ENCODE measurements at regions of chr15 and their contacts with region 1.

Region 1: DNA sequence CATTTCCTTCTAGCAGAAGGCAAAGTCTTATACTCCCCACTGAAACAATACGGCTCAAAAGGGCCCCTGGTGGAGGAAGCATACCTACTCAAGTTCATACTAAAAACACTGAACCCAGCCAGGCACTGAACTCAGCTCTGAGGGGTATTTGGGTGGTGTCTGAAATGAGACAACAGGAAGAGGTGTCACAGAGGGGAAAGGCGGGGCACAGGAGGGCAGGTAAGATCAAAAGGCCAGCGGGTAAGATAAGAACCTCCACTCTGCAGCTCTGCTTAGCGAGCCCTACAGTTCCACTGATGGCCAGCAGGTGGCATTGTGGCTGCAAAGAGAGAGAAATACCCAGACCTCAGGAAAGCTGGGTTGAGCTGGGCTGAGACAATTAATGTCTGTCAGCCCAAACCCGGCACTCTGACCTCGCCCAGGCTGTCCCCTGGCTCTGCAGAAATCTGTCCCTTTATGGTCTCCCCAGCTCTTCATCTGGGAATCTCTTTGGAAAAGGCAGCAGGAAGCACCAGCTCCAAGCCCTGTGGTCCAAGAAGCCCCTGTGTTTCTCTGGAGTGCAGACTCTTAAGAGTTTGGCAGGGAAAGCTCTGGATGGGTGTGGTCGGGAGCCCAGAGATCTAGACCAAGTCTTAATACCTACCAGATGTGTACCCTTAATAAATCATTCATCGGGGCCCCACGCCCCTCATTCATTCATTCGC is 8.4 kb downstream of the MFGE8 start:
- DNase-seq: peak; percentile 86 to 97
- H3K4me3 ChIP-seq: no peak overlapping the region
- CTCF ChIP-seq: peak in 1 of 3 donors; percentile 95
- POLR2A ChIP-seq: no peak

Region 2: DNA sequence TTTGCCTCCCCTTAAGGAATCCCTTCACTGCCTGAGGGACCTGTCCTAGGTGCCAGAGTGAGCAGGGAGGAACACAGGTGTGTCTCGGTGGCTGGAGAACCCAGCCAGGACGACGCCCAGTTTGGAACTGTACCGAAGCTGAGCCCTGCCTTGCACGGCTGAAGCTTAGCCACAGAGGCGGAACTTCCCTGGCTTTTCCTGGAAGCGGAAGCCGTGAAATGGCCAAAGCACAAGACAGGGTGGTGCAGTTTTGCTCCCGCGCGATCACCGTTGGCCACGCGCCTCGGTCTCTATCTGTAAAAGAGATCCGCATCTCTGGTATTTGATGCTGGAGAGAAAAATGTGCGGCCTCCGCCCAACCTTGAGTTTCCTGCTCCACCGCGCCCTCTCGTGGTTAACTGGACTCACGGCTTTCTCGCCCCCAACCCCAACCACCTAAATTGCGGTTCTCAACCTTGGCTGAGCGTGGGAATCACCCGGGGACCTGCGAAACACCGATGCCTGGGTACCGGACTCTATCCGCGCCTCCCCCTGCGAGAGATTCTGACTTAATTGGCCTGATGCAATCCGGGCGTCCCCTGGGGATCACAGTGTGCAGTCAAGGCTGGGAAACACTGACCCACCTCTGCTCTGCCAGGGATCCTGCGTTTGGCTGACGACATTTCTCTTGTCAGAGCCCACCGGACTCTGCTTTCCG is 112.7 kb after region 1 on chr15:
- intact Hi-C with region 1: loop called (anchors 2 kb)
- DNase-seq: peak; percentile 71 to 97
- H3K4me3 ChIP-seq: no peak overlapping the region
- CTCF ChIP-seq: peak in 1 of 3 donors; percentile 50
- POLR2A ChIP-seq: no peak

Region 3: DNA sequence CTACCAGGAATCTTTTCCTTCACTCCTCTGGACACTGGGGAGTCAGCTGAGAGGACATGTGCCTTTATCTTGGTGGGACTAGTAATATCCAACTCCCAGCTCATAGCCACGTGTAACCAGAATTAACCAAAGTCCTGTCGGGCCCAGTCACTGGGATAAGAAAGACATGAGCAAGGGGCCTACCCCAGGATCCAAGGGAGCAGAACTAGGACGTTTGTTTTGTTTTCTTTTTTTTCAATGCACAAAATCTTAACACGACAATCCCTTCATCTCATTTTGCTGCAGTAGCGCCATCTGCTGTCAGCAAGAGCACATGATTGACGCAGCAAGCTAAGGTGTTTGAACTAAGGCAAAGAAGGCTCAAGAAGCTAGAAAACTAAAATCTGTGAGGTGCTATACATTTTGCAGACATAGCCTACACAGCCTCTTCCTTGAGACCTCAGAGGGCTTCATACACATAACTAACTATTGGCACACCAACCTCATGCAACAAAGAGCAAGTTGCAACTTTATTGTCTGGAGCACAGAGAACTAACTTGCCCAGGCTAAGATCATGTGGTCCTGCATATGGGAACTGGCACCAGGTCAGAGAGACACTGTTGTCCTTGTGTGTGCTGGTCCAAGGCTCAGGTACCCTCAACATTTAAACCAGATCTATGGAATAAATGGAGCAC is 273.0 kb after region 1 on chr15:
- intact Hi-C with region 1: loop called (anchors 5 kb)
- DNase-seq: peak; percentile 49 to 87
- H3K4me3 ChIP-seq: no peak overlapping the region
- CTCF ChIP-seq: peak in 1 of 3 donors; percentile 49
- POLR2A ChIP-seq: no peak

Measured in lower leg skin (tissue), 4 donors.